PC-3 (cell line): ENCODE measurements at regions of chr3 and their contacts with region 1.

Region 1: GRCh38 chr3:64030741-64031140 is 7.4 kb upstream of the PSMD6 start:
- DNase-seq: peak; percentile 75
- ATAC-seq: peak; percentile 81
- H3K4me3 ChIP-seq: peak overlapping the region; percentile 35; the same call in 1 of the 2 replicates
- H3K27ac ChIP-seq: peak overlapping the region; percentile 46
- H3K4me1 ChIP-seq: 0 out of 2 replicates have a peak, but pooled peaks cover 4% of the 10 kb centered on the region
- H3K27me3 ChIP-seq: no peaks in the 10 kb centered on the region
- CTCF ChIP-seq: peak; percentile 69

Region 2: GRCh38 chr3:64093825-64094712 is 63.3 kb after region 1 on chr3:
- CTCF ChIA-PET with region 1: interaction called, 5 read pairs
- POLR2A ChIA-PET with region 1: no interaction called
- intact Hi-C with region 1: loop called (anchors 5 kb)
- DNase-seq: peak; percentile 73
- ATAC-seq: peak; percentile 72
- H3K4me3 ChIP-seq: no peak overlapping the region
- H3K27ac ChIP-seq: peak overlapping the region; percentile 89
- H3K4me1 ChIP-seq: peaks cover 37% of the 10 kb centered on the region
- H3K27me3 ChIP-seq: no peaks in the 10 kb centered on the region
- CTCF ChIP-seq: no peak

Region 3: GRCh38 chr3:64163755-64164148 is 133.0 kb after region 1 on chr3:
- CTCF ChIA-PET with region 1: interaction called, 4 read pairs
- POLR2A ChIA-PET with region 1: no interaction called
- intact Hi-C with region 1: loop called (anchors 2 kb)
- DNase-seq: peak; percentile 62
- ATAC-seq: no peak
- H3K4me3 ChIP-seq: no peak overlapping the region
- H3K27ac ChIP-seq: peak overlapping the region; percentile 76
- H3K4me1 ChIP-seq: peaks cover 49% of the 10 kb centered on the region
- H3K27me3 ChIP-seq: no peaks in the 10 kb centered on the region
- CTCF ChIP-seq: no peak

Region 4: GRCh38 chr3:64224826-64225610 is 194.3 kb after region 1 on chr3 and contains the start of gene PRICKLE2:
- CTCF ChIA-PET with region 1: no interaction called
- POLR2A ChIA-PET with region 1: no interaction called
- intact Hi-C with region 1: loop called (anchors 5 kb)
- DNase-seq: no peak
- ATAC-seq: no peak
- H3K4me3 ChIP-seq: no peak within 1 kb of the TSS
- H3K27ac ChIP-seq: no peak within 1 kb of the TSS
- H3K4me1 ChIP-seq: no peaks in the 10 kb centered on the region
- H3K27me3 ChIP-seq: no peaks in the 10 kb centered on the region
- CTCF ChIP-seq: no peak
- total RNA-seq, gene PRICKLE2: 0.46 and 1.8 TPM in 2 replicates

Region 5: DNA sequence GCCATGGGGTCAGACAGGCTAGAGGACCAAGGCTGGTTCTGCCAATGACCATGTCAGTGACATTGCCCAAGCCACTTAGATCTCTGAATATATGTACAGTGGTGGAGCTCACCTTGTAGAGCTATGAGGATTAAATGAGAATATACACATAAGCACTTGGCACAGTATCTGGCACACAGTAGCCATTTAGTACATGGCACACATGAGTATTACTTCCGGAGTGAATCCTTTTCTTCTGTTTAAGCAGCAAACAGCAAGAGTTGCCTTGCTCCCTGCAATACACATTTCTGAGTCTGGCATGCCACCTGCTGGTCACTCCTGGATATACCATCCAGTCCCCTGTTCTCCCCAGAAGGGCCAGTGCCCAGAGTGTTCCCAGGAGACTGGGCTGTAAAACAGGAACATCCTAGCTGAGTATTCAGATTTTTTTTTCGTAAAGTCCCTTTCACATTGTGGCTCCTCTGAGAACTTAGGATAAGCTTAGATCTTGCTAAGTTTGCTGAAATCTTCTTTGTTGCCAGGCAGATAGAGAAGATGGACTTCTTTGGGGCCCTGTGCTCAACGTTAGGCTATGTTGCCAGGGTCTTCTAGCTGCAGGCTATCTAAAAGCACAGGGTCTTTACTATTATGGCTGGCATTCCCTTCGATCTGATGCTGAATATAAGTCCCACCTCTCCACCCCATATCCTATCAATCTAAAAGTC is 453.7 kb after region 1 on chr3:
- CTCF ChIA-PET with region 1: no interaction called
- POLR2A ChIA-PET with region 1: no interaction called
- intact Hi-C with region 1: loop called (anchors 2 kb)
- DNase-seq: peak; percentile 73
- ATAC-seq: peak; percentile 96
- H3K4me3 ChIP-seq: no peak overlapping the region
- H3K27ac ChIP-seq: no peak overlapping the region
- H3K4me1 ChIP-seq: no peaks in the 10 kb centered on the region
- H3K27me3 ChIP-seq: no peaks in the 10 kb centered on the region
- CTCF ChIP-seq: peak; percentile 72